ENCODE measurements at regions of chr6 and their contacts with region 1.

Region 1: DNA sequence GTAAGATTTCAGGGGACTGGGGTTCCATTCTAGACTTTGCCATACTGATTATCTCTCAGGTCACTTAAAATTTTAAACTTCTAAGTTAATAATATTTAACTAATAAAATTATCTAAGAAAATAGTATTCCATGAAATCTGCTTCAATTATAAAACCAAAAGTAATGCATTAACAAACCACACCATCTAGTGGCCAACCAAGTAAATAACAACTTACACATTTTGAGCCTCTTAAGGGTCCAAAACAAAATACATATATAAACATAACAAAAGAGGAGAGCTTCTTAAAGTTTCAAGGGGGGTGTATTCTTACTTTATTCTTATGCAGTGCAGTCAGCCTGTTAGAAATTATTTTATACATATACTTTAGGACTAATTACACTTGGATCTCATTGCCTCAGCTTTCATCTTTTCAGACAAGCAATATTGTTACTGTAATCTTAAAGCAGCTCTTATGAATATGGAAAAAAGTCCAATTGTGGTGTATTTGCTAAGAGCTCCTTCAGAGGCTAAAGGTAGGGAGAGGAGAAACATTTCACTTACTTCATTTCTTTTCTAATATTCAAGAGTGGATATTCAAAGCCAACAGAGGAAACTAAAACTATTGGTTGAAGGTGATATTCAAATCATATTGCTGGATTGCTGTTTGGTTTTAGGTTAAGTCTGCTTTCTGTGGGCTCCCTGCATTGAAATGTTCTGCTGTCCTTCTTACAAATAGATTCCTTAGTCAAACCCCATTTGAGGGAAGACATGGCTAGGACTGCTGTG is 199.7 kb upstream of the SIM1 start:
- DNase-seq: no peak
- H3K4me3 ChIP-seq: no peak overlapping the region
- H3K27ac ChIP-seq: no peak overlapping the region
- H3K27me3 ChIP-seq: no peaks in the 10 kb centered on the region
- CTCF ChIP-seq: peak; percentile 58 to 89 (median 77)

Region 2: DNA sequence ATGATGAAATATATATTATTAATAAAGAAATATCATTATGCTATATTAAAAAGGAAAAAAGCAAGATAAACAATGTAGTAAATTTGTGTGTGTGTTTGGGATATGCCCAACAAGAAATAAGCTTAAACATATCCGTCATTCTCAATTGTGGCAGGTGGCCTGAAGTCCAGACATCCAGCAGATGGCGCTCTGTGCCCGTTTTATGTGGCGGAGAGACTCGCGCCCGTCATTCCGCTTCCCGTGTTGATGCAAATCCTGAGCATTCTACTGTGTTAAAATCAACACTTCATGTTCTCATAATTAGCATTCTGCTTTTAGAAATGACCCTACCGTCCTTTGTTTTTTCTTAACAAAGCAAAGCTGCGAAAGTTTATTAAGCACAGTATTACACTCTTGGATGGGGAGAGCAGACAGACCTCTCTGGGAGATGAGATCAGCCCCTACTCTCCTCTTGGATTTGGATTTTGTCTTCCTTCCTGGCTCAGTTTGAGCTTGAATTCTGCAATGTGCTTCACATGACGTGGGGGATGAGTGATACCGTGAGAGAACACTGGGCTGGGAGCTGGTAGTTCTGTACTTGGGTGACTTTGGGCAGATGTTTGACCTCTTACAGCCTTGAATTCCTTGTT is 796.3 kb before region 1 on chr6:
- intact Hi-C with region 1: loop called in 1 of 2 experiments (anchors 5 kb)
- DNase-seq: peak; percentile 71 to 90 (median 84)
- H3K4me3 ChIP-seq: peak overlapping the region in 23 of 59 donors; percentile 3 to 47 (median 25)
- H3K27ac ChIP-seq: peak overlapping the region in 15 of 59 donors; percentile 11 to 63 (median 43)
- H3K27me3 ChIP-seq: peaks cover 0 to 30% (median 0%) of the 10 kb centered on the region in 45 donors
- CTCF ChIP-seq: peak; percentile 79 to 95 (median 89)

Region 3: DNA sequence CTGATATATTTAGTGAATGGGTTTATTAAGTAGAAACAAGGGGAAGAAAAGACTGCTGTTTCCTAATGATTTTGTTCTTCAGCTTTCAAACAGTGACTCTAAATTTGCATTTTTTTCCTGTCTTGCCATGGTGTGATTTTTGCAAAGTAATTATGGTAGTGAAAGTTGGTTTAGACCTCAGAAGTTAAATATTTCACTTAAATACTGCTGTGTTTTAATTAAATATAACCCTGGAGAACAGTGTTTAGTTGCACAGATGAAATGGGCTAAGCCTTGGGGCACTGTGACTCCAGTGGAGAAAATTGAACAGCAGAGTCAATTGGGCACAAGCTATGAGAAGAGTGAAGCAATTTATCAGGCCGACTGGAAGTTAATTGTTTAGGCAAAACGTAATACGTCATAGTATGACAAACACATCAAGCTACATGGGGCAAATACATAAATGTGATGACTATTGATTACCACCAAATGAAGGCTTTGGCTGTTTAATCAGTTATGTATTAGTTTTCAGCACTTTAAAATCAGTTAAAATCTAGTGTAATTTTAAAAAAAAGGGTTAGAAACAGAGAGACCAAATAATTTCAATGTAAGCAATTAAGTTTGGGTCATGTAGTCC is 559.2 kb before region 1 on chr6:
- intact Hi-C with region 1: loop called in 1 of 2 experiments (anchors 5 kb)
- DNase-seq: no peak
- H3K4me3 ChIP-seq: no peak overlapping the region
- H3K27ac ChIP-seq: no peak overlapping the region
- H3K27me3 ChIP-seq: peaks cover 0 to 27% (median 5%) of the 10 kb centered on the region in 45 donors
- CTCF ChIP-seq: no peak

Region 4: GRCh38 chr6:100116411-100117194 is 547.9 kb before region 1 on chr6:
- intact Hi-C with region 1: loop called in 1 of 2 experiments (anchors 5 kb)
- DNase-seq: peak in 4 of 10 donors; percentile 11 to 57 (median 36)
- H3K4me3 ChIP-seq: no peak overlapping the region
- H3K27ac ChIP-seq: no peak overlapping the region
- H3K27me3 ChIP-seq: peaks cover 0 to 13% (median 0%) of the 10 kb centered on the region in 45 donors
- CTCF ChIP-seq: peak; percentile 63 to 96 (median 80)

Region 5: DNA sequence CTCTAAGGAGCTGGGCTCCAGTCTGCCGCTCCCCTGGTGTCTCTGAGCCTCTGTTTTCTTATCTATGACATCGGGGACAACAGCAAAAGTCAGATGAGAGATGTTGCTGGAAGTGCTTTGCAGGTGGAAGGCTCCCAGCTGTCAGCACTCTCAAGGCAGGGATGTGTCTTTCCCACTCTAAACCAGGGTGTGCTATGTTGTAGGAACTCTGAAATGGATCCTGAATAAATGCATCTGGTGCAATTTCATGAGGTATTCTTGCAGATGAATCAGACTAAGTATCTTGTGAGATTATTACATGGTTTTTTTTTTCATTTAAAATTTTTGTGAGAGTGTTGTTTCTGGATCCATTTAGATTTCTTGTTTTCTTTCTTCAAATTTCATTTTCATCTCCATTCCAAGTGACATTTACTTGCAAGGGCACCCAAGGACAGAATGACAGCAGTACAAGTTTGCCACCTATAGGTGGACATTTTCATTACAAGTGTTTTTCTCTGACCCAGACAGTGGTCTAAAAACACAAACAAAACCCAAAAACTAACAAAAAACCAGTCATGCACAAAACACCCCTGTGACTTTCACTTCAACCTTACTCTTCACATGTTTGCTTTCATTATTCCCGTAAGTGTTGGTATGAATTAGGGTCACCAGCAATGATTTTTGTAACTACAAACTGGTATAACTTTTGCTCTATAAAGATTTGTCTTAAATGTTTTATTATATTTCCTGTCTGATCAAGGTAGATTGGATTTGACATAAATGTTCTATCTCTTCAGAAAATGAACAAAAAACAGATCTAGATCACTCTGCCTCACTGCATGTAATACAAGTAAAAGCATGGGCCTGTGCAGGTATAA is 185.1 kb before region 1 on chr6:
- intact Hi-C with region 1: loop called in 1 of 2 experiments (anchors 10 kb)
- DNase-seq: no peak
- H3K4me3 ChIP-seq: no peak overlapping the region
- H3K27ac ChIP-seq: no peak overlapping the region
- H3K27me3 ChIP-seq: peaks cover 0 to 29% (median 6%) of the 10 kb centered on the region in 45 donors
- CTCF ChIP-seq: peak; percentile 37 to 85 (median 72)

Region 6: DNA sequence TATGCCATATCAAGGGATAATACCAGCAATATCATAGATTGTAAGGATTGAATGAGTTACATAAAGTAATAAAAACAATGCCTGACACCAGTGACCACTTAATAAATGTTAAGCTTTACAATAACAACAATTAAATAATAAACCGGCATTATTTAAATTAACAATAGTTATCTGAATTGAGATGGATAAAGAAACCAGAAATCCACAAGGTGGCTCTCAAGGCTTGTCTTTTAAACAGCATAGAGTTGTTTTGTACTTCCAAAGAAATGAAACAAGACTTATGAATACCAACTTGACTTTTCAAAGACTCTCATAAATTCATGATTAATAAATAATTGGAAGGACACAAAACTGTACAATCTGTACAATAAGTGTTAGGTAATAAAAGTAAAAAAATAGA is 13.6 kb after region 1 on chr6:
- intact Hi-C with region 1: no loop called
- DNase-seq: no peak
- H3K4me3 ChIP-seq: no peak overlapping the region
- H3K27ac ChIP-seq: no peak overlapping the region
- H3K27me3 ChIP-seq: no peaks in the 10 kb centered on the region
- CTCF ChIP-seq: peak in 13 of 56 donors; percentile 12 to 42 (median 33)